Activated T-helper 1 cell treated with anti-CD3 and anti-CD28 coated beads, Interleukin-12 subunit alpha, Interleukin-12 subunit beta, Interleukin-2, Interleukin-4 antibody, amounts not matched to agents 30 ng/mL and 10 ng/mL and 1 ng/mL, durations not matched to agents 14 hours and 24 hours and 36 hours (primary cell): ENCODE measurements at regions of chr16 and their contacts with region 1.

Region 1: GRCh38 chr16:2968738-2969544 is at the start of gene PAQR4:
- DNase-seq: peak; percentile 85
- H3K4me3 Mint-ChIP-seq: peak within 1 kb of the TSS; percentile 78
- H3K27ac Mint-ChIP-seq: peak within 1 kb of the TSS; percentile 52
- H3K4me1 Mint-ChIP-seq: peaks cover 22% of the 10 kb centered on the region
- H3K27me3 Mint-ChIP-seq: peaks cover 17% of the 10 kb centered on the region
- total RNA-seq, gene PAQR4: 40.1 and 44.0 TPM in 2 replicates

Region 2: DNA sequence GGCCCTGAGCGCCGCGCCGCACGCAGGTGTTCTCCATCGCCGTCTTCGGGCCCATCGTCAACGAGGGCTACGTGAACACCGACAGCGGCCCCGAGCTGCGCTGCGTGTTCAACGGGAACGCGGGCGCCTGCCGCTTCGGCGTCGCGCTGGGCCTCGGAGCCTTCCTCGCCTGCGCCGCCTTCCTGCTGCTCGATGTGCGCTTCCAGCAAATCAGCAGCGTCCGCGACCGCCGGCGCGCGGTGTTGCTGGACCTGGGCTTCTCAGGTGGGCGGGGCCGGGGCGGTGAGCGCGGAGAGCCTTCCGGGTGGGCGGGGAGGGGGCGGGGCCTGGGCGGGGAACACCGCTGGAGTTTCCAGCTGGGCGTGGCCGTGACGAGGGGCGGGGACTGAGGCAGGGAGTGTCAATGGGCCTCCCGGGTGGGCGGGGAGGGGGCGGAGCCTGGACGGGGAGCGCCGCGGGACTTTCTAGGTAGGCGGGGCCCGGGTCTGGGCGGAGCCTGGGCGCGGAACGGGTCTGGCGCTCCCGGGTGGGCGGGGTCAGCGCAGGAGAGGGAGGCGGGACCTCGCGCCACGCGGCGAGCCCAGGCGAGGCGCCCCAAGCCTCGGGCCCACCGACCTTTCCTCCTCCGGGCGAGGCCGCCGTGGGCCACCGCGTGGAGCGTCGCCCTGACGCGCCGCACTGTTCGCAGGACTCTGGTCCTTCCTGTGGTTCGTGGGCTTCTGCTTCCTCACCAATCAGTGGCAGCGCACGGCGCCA is 976.8 kb before region 1 on chr16:
- intact Hi-C with region 1: loop called (anchors 2 kb)
- DNase-seq: peak; percentile 91
- H3K4me3 Mint-ChIP-seq: peak overlapping the region; percentile 82
- H3K27ac Mint-ChIP-seq: no peak overlapping the region
- H3K4me1 Mint-ChIP-seq: peaks cover 26% of the 10 kb centered on the region
- H3K27me3 Mint-ChIP-seq: peaks cover 11% of the 10 kb centered on the region

Region 3: GRCh38 chr16:2883027-2883851 is 85.7 kb before region 1 on chr16 and contains the start of gene FLYWCH2:
- intact Hi-C with region 1: loop called (anchors 2 kb)
- DNase-seq: peak; percentile 100
- H3K4me3 Mint-ChIP-seq: peak within 1 kb of the TSS; percentile 88
- H3K27ac Mint-ChIP-seq: peak within 1 kb of the TSS; percentile 95
- H3K4me1 Mint-ChIP-seq: peaks cover 16% of the 10 kb centered on the region
- H3K27me3 Mint-ChIP-seq: no peaks in the 10 kb centered on the region
- total RNA-seq, gene FLYWCH2: 22.9 and 25.4 TPM in 2 replicates

Region 4: DNA sequence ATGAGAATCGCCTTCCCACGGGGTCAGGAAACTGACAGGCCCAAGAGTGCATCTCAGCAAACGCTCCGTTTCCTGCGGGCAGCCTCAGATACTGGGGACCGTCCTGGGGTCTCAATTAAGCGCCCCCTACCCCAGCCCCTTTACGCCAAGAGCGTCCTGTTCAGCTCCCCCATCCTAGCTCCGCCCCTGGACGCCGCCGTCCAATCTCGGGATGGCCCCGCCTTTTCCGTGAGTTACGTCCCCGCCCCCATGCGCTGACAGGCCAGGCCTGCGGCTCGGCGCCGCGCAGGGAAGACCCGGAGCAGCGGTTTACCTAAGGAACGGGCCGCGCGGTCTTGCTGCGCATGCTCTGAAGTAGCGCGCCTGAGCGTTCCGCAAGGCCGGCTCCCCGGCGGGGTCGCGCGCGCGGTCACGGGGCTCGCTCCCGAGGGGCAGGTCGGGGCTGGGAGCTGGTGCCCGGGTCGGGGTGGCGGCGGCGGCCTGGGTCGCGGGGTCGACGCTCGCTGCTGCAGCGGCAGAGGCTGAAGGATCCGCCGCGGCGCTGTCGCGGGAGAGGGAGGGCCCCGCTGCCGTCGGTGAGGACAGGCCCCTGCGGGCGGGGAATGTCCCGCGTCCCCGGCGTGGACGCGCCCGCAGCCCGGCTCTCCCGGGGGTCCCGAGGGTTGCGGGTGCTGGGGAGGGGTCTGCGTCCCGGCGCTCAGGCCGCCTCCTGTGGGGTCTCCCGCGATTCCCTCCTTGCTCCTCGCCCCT is 57.2 kb before region 1 on chr16 and contains the start of gene FLYWCH1:
- intact Hi-C with region 1: loop called (anchors 1 kb)
- DNase-seq: peak; percentile 99
- H3K4me3 Mint-ChIP-seq: peak within 1 kb of the TSS; percentile 86
- H3K27ac Mint-ChIP-seq: peak within 1 kb of the TSS; percentile 76
- H3K4me1 Mint-ChIP-seq: peaks cover 24% of the 10 kb centered on the region
- H3K27me3 Mint-ChIP-seq: peaks cover 6% of the 10 kb centered on the region
- total RNA-seq, gene FLYWCH1: 61.1 and 65.7 TPM in 2 replicates

Region 5: GRCh38 chr16:2926650-2927646 is 42.0 kb before region 1 on chr16:
- intact Hi-C with region 1: no loop called
- DNase-seq: peak; percentile 83
- H3K4me3 Mint-ChIP-seq: no peak overlapping the region
- H3K27ac Mint-ChIP-seq: no peak overlapping the region
- H3K4me1 Mint-ChIP-seq: peaks cover 23% of the 10 kb centered on the region
- H3K27me3 Mint-ChIP-seq: no peaks in the 10 kb centered on the region

Region 6: GRCh38 chr16:2955779-2956578 is 13.0 kb before region 1 on chr16:
- intact Hi-C with region 1: no loop called
- DNase-seq: no peak
- H3K4me3 Mint-ChIP-seq: no peak overlapping the region
- H3K27ac Mint-ChIP-seq: no peak overlapping the region
- H3K4me1 Mint-ChIP-seq: no peaks in the 10 kb centered on the region
- H3K27me3 Mint-ChIP-seq: no peaks in the 10 kb centered on the region

Region 7: GRCh38 chr16:2980227-2981086 is 11.5 kb after region 1 on chr16 and contains the start of gene PKMYT1:
- intact Hi-C with region 1: loop called (anchors 2 kb)
- DNase-seq: peak; percentile 97
- H3K4me3 Mint-ChIP-seq: peak within 1 kb of the TSS; percentile 91
- H3K27ac Mint-ChIP-seq: peak within 1 kb of the TSS; percentile 87
- H3K4me1 Mint-ChIP-seq: peaks cover 4% of the 10 kb centered on the region
- H3K27me3 Mint-ChIP-seq: peaks cover 4% of the 10 kb centered on the region
- total RNA-seq, gene PKMYT1: 151 and 152 TPM in 2 replicates

Region 8: DNA sequence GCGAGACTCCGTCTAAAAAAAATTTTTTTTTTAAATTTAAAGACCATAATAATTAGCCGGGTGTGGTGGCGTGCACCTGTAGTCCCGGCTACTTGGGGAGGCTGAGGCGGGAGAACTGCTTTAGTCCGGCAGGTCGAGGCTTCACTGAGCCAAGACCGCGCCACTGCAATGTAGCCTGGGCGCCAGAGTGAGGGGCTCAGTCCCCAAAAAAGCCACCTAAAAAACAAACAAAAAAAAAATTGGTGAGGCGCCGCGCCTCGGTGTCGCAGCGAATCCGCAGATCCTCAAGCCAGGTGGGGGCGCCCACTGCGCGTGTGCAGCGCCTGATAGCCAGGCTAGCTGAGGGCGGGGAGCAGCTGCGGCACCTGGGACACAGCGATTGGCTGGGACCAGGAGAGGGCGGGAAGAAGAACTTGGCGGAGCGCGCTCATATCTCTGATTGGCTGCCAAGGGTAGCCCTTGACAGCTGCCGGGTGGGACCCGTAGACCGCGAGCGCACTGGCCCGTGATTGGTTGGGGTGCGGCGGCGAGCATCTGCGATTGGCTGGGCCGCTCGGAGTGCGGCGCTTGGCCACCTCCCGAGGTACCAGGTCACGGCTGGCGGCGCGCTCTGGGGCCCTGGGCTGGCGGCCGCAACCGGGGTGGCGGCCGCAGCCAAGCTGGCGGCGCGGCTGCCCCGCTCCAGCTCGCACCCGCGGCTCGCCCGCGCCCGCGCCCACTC is 34.8 kb after region 1 on chr16:
- intact Hi-C with region 1: loop called (anchors 5 kb)
- DNase-seq: peak; percentile 98
- H3K4me3 Mint-ChIP-seq: peak overlapping the region; percentile 74
- H3K27ac Mint-ChIP-seq: peak overlapping the region; percentile 21
- H3K4me1 Mint-ChIP-seq: peaks cover 22% of the 10 kb centered on the region
- H3K27me3 Mint-ChIP-seq: peaks cover 18% of the 10 kb centered on the region

Region 9: GRCh38 chr16:3023669-3024478 is 54.9 kb after region 1 on chr16 and contains the starts of genes HCFC1R1 and THOC6:
- intact Hi-C with region 1: loop called (anchors 2 kb)
- DNase-seq: peak; percentile 94
- H3K4me3 Mint-ChIP-seq: peak within 1 kb of the TSS; percentile 84
- H3K27ac Mint-ChIP-seq: peak within 1 kb of the TSS; percentile 91
- H3K4me1 Mint-ChIP-seq: peaks cover 36% of the 10 kb centered on the region
- H3K27me3 Mint-ChIP-seq: peaks cover 1% of the 10 kb centered on the region
- total RNA-seq, gene HCFC1R1: 30.0 and 30.9 TPM in 2 replicates
- total RNA-seq, gene THOC6: 48.3 and 49.0 TPM in 2 replicates

Region 10: GRCh38 chr16:3099732-3100499 is 131.0 kb after region 1 on chr16:
- intact Hi-C with region 1: no loop called
- DNase-seq: peak; percentile 87
- H3K4me3 Mint-ChIP-seq: peak overlapping the region; percentile 69
- H3K27ac Mint-ChIP-seq: peak overlapping the region; percentile 78
- H3K4me1 Mint-ChIP-seq: peaks cover 32% of the 10 kb centered on the region
- H3K27me3 Mint-ChIP-seq: no peaks in the 10 kb centered on the region